Ascending aorta (tissue), 2 donors: ENCODE measurements at regions of chr3 and their contacts with region 1.

Region 1: GRCh38 chr3:117019082-117019713 is 309.6 kb downstream of the TUSC7 start:
- DNase-seq: peak in 1 of 2 donors; percentile 74
- H3K4me3 ChIP-seq: peak overlapping the region in 1 of 2 donors; percentile 42
- H3K27ac ChIP-seq: no peak overlapping the region
- H3K4me1 ChIP-seq: no peaks in the 10 kb centered on the region
- H3K27me3 ChIP-seq: no peaks in the 10 kb centered on the region
- CTCF ChIP-seq: peak; percentile 60 to 83 (median 74)

Region 2: DNA sequence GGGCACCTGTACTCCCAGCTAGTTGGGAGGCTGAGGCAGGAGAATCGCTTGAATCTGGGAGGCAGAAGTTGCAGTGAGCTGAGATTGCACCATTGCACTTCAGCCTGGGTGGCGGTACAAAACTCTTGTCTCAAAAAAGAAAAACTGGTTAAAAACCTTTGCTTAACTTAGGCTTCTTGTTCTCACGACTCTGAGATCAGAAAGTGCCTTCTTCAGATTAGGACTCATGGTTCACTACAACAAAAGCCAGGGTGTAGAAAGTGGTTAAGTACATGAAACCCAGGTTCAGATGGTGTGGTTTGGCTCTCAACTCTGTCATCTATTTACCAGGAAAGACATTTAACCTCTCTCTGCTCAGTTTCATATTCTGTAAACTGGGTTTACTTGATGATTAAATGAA is 141.2 kb before region 1 on chr3:
- intact Hi-C with region 1: no loop called
- DNase-seq: no peak
- H3K4me3 ChIP-seq: no peak overlapping the region
- H3K27ac ChIP-seq: no peak overlapping the region
- H3K4me1 ChIP-seq: no peaks in the 10 kb centered on the region
- H3K27me3 ChIP-seq: no peaks in the 10 kb centered on the region
- CTCF ChIP-seq: no peak

Region 3: DNA sequence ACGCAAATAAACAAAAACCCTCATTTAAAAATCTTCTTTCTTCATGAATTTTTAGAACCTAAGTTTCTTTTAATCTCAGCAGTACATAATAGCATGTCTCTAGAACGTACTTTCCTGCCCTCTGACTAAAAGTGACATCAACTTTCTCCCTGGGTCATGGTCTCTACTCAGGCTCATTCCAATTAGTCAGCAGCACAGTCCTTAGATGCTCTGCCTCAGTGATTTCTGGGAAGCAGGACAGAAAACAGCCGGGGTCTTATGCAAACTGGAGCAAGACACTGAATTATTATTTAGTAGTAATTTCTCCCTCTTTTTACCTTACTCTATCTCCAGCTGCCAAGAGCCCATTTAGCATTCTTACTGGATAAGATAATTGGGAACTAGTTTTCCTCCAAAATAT is 55.6 kb after region 1 on chr3:
- intact Hi-C with region 1: no loop called
- DNase-seq: no peak
- H3K4me3 ChIP-seq: no peak overlapping the region
- H3K27ac ChIP-seq: no peak overlapping the region
- H3K4me1 ChIP-seq: no peaks in the 10 kb centered on the region
- H3K27me3 ChIP-seq: no peaks in the 10 kb centered on the region
- CTCF ChIP-seq: no peak

Region 4: GRCh38 chr3:117526470-117527079 is 507.4 kb after region 1 on chr3:
- intact Hi-C with region 1: loop called (anchors 5 kb)
- DNase-seq: no peak
- H3K4me3 ChIP-seq: no peak overlapping the region
- H3K27ac ChIP-seq: no peak overlapping the region
- H3K4me1 ChIP-seq: no peaks in the 10 kb centered on the region
- H3K27me3 ChIP-seq: no peaks in the 10 kb centered on the region
- CTCF ChIP-seq: peak; percentile 16 to 60 (median 46)

Region 5: GRCh38 chr3:117719316-117719926 is 700.2 kb after region 1 on chr3:
- intact Hi-C with region 1: loop called (anchors 10 kb)
- DNase-seq: no peak
- H3K4me3 ChIP-seq: no peak overlapping the region
- H3K27ac ChIP-seq: no peak overlapping the region
- H3K4me1 ChIP-seq: no peaks in the 10 kb centered on the region
- H3K27me3 ChIP-seq: no peaks in the 10 kb centered on the region
- CTCF ChIP-seq: peak in 2 of 3 experiments; percentile 59 to 67